A549 (cell line): ENCODE measurements at regions of chr6 and their contacts with region 1.

Region 1: DNA sequence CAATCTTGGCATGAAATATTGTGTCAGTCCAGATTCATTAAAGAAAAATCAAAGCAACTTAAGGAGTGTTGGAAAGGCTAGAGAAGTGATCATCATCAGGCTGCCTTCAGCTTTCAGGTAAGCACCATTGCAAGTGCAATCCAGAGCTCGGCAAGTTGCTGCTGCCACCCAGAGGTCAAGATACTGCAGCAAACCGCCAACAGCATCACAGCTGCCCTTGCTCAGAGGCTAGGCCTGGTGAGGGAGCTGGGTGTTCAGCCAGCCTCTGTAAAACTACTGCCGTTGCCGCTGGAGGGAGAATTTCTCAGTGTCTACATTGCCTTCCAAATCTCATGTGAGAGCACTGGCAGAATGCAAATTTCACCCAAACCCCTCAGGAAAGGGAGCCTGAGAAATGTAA is 5.8 kb upstream of the SYNE1 start:
- DNase-seq: peak; percentile 18 to 78
- ATAC-seq: peak; percentile 99 to 100
- H3K4me3 ChIP-seq: no peak overlapping the region
- H3K27ac ChIP-seq: no peak overlapping the region
- H3K4me1 ChIP-seq: no peaks in the 10 kb centered on the region
- CTCF ChIP-seq: peak; percentile 60
- EP300 ChIP-seq: no peak
- POLR2A ChIP-seq: no peak
- RAD21 ChIP-seq: peak; percentile 73 to 77

Region 2: DNA sequence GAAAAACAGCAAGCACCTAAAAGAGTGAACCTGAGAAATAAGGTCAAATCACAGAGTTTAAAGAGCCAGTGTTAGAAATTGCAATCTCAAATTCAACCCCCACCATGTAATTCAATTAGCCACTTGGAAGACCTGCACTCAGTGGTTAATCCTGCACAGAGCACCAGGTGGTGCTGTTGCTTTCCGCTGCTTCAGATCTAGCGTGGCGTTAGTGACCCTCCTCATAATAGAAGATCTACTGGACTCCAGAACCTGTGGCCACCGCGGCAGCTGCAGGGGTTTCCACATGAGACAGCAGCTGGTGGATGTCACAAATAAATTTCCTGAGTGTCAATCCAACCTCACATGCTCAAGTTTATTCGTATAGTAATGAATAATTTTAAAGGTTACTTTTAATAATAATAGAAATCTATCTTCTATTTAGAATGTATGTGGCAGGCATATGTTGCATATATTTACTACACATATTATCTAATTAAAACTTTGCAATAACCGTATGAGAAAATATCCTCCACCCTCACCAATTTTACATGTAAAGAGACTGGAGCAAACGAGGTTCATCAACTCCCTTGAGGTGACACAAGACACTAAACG is 90.3 kb before region 1 on chr6:
- CTCF ChIA-PET with region 1: interaction called, 10 read pairs
- POLR2A ChIA-PET with region 1: no interaction called
- DNase-seq: peak; percentile 31 to 65
- ATAC-seq: peak; percentile 93 to 98
- H3K4me3 ChIP-seq: no peak overlapping the region
- H3K27ac ChIP-seq: no peak overlapping the region
- H3K4me1 ChIP-seq: no peaks in the 10 kb centered on the region
- CTCF ChIP-seq: peak; percentile 68
- EP300 ChIP-seq: no peak
- POLR2A ChIP-seq: no peak
- RAD21 ChIP-seq: peak; percentile 74 to 76

Region 3: DNA sequence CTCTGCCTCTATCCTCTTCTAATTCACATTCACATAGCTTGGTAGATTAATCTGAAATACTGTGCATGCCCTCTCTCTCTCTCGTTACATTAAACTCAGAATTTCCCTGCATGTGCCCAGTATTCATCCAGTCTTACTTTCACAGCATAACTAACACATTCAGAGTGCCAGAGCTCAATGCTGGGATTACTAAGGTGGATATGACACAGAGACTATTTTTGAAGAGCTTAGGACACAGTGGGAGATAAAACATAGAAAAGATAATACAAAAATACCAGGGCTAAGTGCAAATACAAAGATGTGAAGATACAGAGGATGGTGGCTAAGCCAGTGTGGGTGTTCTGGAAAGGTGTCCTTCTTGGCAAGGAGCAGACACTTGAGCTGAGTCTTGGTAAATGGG is 12.2 kb before region 1 on chr6:
- CTCF ChIA-PET with region 1: interaction called, 11 read pairs
- POLR2A ChIA-PET with region 1: no interaction called
- DNase-seq: no peak
- ATAC-seq: no peak
- H3K4me3 ChIP-seq: no peak overlapping the region
- H3K27ac ChIP-seq: no peak overlapping the region
- H3K4me1 ChIP-seq: no peaks in the 10 kb centered on the region
- CTCF ChIP-seq: no peak
- EP300 ChIP-seq: no peak
- POLR2A ChIP-seq: no peak
- RAD21 ChIP-seq: no peak